ENCODE measurements at regions of chr7 and their contacts with region 1.

Region 1: GRCh38 chr7:127874951-127875608 is 156.2 kb downstream of the LRRC4 start:
- DNase-seq: no peak
- H3K4me3 Mint-ChIP-seq: no peak overlapping the region
- H3K27ac Mint-ChIP-seq: no peak overlapping the region
- H3K4me1 Mint-ChIP-seq: peaks cover 23% of the 10 kb centered on the region
- H3K27me3 Mint-ChIP-seq: no peaks in the 10 kb centered on the region

Region 2: DNA sequence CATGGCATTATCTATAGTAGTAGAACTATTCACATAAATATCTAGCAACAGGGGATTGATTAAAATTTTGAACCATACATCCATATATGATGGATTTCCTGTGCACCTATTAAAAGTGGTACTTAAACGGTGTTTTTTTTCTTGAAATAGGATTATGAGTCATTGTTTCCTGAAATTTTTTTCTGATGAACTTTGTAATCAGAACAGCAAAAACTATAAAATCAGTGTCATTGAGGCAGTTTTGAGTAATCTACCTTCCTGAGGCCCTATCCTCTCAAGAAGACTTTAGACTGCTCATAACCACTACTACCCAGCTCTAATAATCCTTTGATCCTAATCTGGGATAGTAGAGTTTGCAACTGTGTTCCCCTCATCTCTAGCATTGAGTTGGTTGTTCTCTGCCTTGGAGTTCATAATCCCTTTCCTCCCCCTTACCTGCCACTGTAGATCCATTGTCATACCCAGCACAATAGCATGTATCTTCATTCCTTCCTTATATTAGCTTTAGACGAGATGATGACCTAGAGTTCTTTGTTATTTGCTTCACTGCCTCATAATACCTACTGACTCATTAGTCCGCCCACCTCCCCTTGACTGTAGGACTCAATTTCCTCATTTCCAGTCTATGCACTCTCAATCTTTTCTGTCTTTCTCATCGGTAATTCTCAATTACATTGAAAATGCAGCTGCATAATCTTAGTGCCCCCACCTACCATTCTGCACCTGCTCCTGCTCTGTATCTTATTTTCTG is 22.8 kb after region 1 on chr7:
- intact Hi-C with region 1: loop called (anchors 1 kb)
- DNase-seq: no peak
- H3K4me3 Mint-ChIP-seq: no peak overlapping the region
- H3K27ac Mint-ChIP-seq: no peak overlapping the region
- H3K4me1 Mint-ChIP-seq: peaks cover 20% of the 10 kb centered on the region
- H3K27me3 Mint-ChIP-seq: no peaks in the 10 kb centered on the region